SK-N-SH (cell line): ENCODE measurements at regions of chr12 and their contacts with region 1.

Region 1: DNA sequence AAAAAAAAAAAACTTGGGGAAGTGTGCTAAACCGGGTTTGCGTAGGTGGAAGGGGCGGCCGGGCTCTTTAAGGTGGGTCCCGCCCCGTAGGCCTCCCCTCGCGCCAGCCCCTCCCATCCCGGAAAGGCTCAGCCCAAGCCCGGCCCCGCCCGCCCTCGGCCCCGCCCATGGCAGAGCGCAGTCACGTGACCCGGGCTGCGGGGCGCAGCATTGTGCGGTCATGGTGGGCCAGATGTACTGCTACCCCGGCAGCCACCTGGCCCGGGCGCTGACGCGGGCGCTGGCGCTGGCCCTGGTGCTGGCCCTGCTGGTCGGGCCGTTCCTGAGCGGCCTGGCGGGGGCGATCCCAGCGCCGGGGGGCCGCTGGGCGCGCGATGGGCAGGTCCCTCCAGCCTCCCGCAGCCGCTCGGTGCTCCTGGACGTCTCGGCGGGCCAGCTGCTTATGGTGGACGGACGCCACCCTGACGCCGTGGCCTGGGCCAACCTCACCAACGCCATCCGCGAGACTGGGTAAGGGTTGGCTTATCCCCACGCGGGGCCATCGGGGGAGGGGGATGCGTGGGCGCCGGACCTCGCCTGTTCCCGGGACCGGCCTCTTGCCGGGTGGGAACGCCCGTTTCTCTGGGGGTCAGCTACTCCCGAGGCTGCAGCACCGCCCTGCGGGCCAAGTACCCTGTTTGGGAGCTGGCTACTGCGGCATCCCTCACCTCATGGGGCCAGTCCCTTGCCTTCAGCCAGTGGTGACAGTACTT is at the start of gene PLBD2:
- DNase-seq: peak; percentile 99
- H3K4me3 ChIP-seq: peak within 1 kb of the TSS; percentile 72 to 86
- H3K27ac ChIP-seq: peak within 1 kb of the TSS; percentile 22 to 51; a peak in 2 of 4 replicates
- H3K4me1 ChIP-seq: peaks cover 0 to 11% of the 10 kb centered on the region in 2 experiments; a peak in 1 of 4 replicates
- H3K27me3 ChIP-seq: no peaks in the 10 kb centered on the region
- CTCF ChIP-seq: no peak
- EP300 ChIP-seq: no peak
- RAD21 ChIP-seq: peak; percentile 35
- polyA plus RNA-seq, gene PLBD2: 12.1 and 15.2 TPM in 2 replicates

Region 2: GRCh38 chr12:113165521-113166450 is 192.8 kb before region 1 on chr12:
- CTCF ChIA-PET with region 1: no interaction called
- POLR2A ChIA-PET with region 1: no interaction called
- DNase-seq: no peak
- H3K4me3 ChIP-seq: no peak overlapping the region
- H3K27ac ChIP-seq: no peak overlapping the region
- H3K4me1 ChIP-seq: peaks cover 7 to 17% of the 10 kb centered on the region in 2 experiments; a peak in 2 of 4 replicates
- H3K27me3 ChIP-seq: no peaks in the 10 kb centered on the region
- CTCF ChIP-seq: no peak
- EP300 ChIP-seq: no peak
- RAD21 ChIP-seq: no peak

Region 3: DNA sequence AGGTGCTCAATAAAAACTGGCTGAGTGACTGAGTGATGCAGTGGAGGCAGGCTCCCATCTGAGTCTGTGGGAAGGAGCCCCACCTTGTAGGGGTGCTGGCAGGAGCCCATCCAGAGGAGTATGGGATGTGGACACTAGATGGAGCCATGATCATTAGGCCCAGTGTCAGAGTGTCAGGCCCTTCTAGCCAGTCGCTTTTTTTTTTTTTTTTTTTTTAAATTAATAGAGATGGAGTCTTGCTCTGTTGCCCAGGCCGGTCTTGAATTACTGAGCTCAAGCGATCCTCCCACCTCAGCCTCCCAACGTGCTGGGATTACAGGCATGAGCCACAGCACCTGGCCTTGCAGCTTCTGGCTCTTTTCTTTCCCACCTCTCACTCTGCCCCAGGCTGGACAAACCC is 161.6 kb before region 1 on chr12:
- CTCF ChIA-PET with region 1: interaction called, 12 read pairs
- POLR2A ChIA-PET with region 1: interaction called, 4 read pairs
- DNase-seq: peak; percentile 92
- H3K4me3 ChIP-seq: no peak overlapping the region; a peak in 1 of 4 replicates
- H3K27ac ChIP-seq: no peak overlapping the region
- H3K4me1 ChIP-seq: peaks cover 15 to 28% of the 10 kb centered on the region in 2 experiments; a peak in 3 of 4 replicates
- H3K27me3 ChIP-seq: no peaks in the 10 kb centered on the region
- CTCF ChIP-seq: peak; percentile 77
- EP300 ChIP-seq: no peak
- RAD21 ChIP-seq: peak; percentile 87